Activated T-helper 2 cell treated with anti-CD3 and anti-CD28 coated beads, Interferon-gamma antibody, Interleukin-2, Interleukin-4, amounts not matched to agents 10 μg/mL and 5 μg/mL and 100 μg/mL, durations not matched to agents 14 hours and 24 hours and 36 hours (primary cell): ENCODE measurements at regions of chr5 and their contacts with region 1.

Region 1: DNA sequence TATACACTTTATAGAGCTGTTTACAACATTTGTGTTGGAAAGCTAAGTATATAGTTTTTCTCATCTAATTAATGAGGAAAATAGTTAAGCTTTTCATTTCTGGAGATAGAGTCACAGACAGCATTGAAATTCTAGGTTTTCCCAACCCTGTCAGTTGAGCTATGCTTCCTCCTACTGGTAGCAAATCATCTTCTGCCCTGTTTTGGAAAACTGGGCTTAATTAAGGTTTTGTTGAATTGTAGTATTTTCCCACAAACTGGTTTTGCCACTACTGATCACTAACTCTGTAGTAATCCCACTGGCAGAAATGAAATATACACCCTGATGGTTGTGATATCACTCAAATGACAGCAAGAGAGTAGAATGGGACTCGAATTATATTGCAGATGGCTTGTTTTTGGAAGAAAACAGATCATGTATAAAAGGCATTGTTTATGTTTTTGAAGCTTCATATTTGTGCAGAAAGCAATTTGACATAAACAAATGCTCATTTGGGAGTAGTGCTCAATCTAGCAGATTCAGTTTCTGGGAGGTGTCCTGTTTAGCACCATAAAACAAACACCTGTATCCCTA is 46.6 kb downstream of the CD180 start:
- DNase-seq: no peak
- H3K4me3 Mint-ChIP-seq: no peak overlapping the region
- H3K27ac Mint-ChIP-seq: no peak overlapping the region
- H3K4me1 Mint-ChIP-seq: peaks cover 6% of the 10 kb centered on the region
- H3K27me3 Mint-ChIP-seq: no peaks in the 10 kb centered on the region

Region 2: DNA sequence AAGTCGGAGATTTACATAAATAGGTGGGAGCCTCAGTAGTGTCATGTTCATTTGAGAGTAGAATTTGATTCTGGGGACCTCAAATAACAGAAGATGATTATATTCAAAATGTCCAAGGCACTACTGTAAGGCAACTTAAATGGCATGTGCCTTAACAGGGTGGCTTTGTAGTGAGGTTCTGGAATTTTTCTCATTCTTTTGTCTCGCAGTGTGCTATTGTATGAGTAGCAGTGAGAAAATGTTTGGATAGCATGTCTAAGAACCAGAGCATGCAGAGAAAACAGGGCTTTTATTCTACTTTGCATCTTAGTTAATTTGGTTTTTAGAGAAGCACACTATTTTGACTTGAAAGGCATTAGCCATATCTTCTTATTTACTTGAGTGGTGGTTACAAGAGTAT is 528.9 kb before region 1 on chr5:
- intact Hi-C with region 1: no loop called
- DNase-seq: no peak
- H3K4me3 Mint-ChIP-seq: no peak overlapping the region
- H3K27ac Mint-ChIP-seq: no peak overlapping the region
- H3K4me1 Mint-ChIP-seq: peaks cover 13% of the 10 kb centered on the region
- H3K27me3 Mint-ChIP-seq: peaks cover 21% of the 10 kb centered on the region

Region 3: GRCh38 chr5:66987949-66988838 is 161.8 kb before region 1 on chr5:
- intact Hi-C with region 1: loop called (anchors 2 kb)
- DNase-seq: no peak
- H3K4me3 Mint-ChIP-seq: no peak overlapping the region
- H3K27ac Mint-ChIP-seq: no peak overlapping the region
- H3K4me1 Mint-ChIP-seq: peaks cover 8% of the 10 kb centered on the region
- H3K27me3 Mint-ChIP-seq: peaks cover 19% of the 10 kb centered on the region

Region 4: GRCh38 chr5:67115246-67115645 is 34.8 kb before region 1 on chr5:
- intact Hi-C with region 1: no loop called
- DNase-seq: no peak
- H3K4me3 Mint-ChIP-seq: no peak overlapping the region
- H3K27ac Mint-ChIP-seq: no peak overlapping the region
- H3K4me1 Mint-ChIP-seq: no peaks in the 10 kb centered on the region
- H3K27me3 Mint-ChIP-seq: no peaks in the 10 kb centered on the region